ENCODE measurements at regions of chr6 and their contacts with region 1.

Region 1: DNA sequence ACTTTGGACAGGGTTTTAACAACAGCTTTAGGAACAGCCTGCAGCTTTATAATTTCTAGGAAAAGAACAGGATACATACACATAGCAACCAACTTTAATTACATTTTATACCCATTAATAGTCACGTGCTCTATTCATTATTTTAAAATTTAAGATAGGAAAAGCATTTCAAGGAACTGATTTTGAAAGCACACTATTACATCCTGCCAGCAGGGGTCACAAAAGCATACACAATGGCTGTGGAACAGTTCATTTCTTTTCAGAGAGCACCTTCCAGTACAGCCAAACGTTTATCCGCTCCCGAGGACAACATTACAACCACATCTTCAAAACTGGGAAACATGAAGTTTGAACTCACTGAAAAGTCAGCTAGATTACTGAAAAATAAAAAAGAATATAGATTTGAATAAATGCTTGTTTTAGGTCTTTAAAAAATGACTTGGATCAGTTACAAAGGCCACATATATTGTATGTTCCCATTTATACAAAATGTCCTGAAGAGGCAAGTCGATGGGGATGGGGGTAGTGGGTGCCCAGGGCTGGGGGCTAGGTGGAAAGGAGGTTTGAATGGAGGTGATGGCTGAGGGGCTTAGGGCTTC is 104.6 kb upstream of the EXOC2 start:
- H3K4me3 Mint-ChIP-seq: no peak overlapping the region
- H3K27ac Mint-ChIP-seq: no peak overlapping the region
- H3K4me1 Mint-ChIP-seq: peaks cover 2% of the 10 kb centered on the region
- H3K27me3 Mint-ChIP-seq: peaks cover 62% of the 10 kb centered on the region

Region 2: GRCh38 chr6:842141-842540 is 44.6 kb after region 1 on chr6:
- intact Hi-C with region 1: no loop called
- H3K4me3 Mint-ChIP-seq: no peak overlapping the region
- H3K27ac Mint-ChIP-seq: no peak overlapping the region
- H3K4me1 Mint-ChIP-seq: no peaks in the 10 kb centered on the region
- H3K27me3 Mint-ChIP-seq: peaks cover 6% of the 10 kb centered on the region

Region 3: GRCh38 chr6:1381481-1382330 is 584.1 kb after region 1 on chr6:
- intact Hi-C with region 1: loop called (anchors 5 kb)
- H3K4me3 Mint-ChIP-seq: peak overlapping the region; percentile 32
- H3K27ac Mint-ChIP-seq: no peak overlapping the region
- H3K4me1 Mint-ChIP-seq: peaks cover 28% of the 10 kb centered on the region
- H3K27me3 Mint-ChIP-seq: peaks cover 97% of the 10 kb centered on the region

Region 4: DNA sequence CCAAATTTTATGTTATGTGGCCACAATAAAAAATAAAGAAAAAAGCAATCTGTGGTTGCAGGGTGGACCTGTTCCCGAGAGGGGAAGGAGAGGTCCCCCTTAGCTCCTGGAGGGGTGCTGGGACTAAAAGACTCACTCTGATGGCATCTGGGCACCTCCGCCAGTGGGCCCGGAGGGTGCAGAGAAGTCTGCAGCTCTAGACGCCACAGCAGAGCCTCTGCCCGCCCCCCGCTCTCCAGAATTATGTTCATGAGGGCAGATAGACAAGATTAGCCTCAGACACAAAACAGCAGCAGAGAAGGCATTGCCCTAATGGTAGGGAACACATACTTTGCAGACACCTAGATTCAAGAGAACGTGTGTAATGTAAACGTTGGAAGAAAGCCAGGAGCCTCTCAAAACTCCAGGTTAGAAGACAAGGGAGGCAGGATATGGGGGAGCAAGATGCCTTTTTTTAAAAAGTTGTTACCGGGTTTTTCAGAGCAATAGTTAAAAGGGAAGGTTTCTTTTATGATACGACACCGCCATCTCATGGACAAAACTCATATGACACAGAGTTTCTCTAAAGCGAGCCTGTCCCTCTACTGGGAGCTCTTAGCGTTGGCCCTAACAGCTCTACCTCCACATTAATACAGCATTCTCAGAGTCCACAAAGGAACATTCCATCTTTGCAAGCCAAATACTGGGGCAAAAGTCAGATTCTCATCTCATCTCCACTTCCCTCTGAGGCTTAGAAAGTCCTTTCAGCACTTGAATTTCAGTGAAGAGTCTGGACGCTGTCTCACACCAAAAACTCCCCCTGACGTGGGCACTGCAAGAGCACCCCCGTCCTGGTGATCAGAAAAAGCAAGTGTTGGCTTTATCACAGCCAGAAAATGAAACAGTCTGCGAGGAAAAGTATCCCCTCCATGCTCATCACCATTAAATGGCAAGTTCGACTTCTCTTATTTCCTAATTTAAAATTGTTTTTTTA is 639.0 kb after region 1 on chr6:
- intact Hi-C with region 1: loop called (anchors 2 kb)
- H3K4me3 Mint-ChIP-seq: no peak overlapping the region
- H3K27ac Mint-ChIP-seq: no peak overlapping the region
- H3K4me1 Mint-ChIP-seq: no peaks in the 10 kb centered on the region
- H3K27me3 Mint-ChIP-seq: peaks cover 39% of the 10 kb centered on the region

Measured in dendritic cell treated with granulocyte-macrophage colony-stimulating factor and Interleukin-4, amounts not matched to agents 40 ng/mL and 50 ng/mL, for 4 days (primary cell).